ENCODE measurements at regions of chr6 and their contacts with region 1.

Region 1: GRCh38 chr6:146719387-146719786 is 120.6 kb downstream of the ADGB start:
- DNase-seq: no peak
- H3K4me3 ChIP-seq: no peak overlapping the region
- H3K27ac ChIP-seq: no peak overlapping the region
- H3K4me1 ChIP-seq: no peaks in the 10 kb centered on the region
- H3K27me3 ChIP-seq: no peaks in the 10 kb centered on the region
- CTCF ChIP-seq: no peak
- EP300 ChIP-seq: no peak
- POLR2A ChIP-seq: no peak

Region 2: DNA sequence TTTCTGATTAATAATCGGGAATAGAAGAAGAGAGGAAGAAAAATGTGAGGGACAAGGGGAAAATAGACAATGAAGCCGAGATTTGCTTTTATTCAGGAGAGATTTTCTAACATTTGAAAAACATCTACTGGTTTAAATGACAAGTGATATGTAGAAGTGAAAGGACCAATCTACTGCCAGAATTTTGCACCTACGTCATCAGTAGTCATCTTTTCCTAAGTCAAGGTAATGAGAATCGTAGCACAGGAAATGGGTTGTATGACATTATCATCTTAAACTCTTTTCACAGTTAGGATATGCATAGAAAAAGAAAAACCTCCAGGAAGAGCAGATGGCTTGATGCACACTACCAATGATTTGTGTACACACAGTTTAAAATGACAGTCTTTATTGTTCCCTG is 221.1 kb before region 1 on chr6:
- intact Hi-C with region 1: no loop called
- DNase-seq: no peak
- H3K4me3 ChIP-seq: no peak overlapping the region
- H3K27ac ChIP-seq: no peak overlapping the region
- H3K4me1 ChIP-seq: no peaks in the 10 kb centered on the region
- H3K27me3 ChIP-seq: no peaks in the 10 kb centered on the region
- CTCF ChIP-seq: no peak
- EP300 ChIP-seq: no peak
- POLR2A ChIP-seq: no peak

Region 3: GRCh38 chr6:148021699-148022098 is 1302.3 kb after region 1 on chr6:
- intact Hi-C with region 1: loop called in 1 of 4 experiments (anchors 10 kb)
- DNase-seq: no peak
- H3K4me3 ChIP-seq: no peak overlapping the region
- H3K27ac ChIP-seq: no peak overlapping the region
- H3K4me1 ChIP-seq: no peaks in the 10 kb centered on the region
- H3K27me3 ChIP-seq: no peaks in the 10 kb centered on the region
- CTCF ChIP-seq: no peak
- EP300 ChIP-seq: no peak
- POLR2A ChIP-seq: no peak

Measured in ovary (tissue), 10 donors.